A673 (cell line): ENCODE measurements at regions of chr12 and their contacts with region 1.

Region 1: DNA sequence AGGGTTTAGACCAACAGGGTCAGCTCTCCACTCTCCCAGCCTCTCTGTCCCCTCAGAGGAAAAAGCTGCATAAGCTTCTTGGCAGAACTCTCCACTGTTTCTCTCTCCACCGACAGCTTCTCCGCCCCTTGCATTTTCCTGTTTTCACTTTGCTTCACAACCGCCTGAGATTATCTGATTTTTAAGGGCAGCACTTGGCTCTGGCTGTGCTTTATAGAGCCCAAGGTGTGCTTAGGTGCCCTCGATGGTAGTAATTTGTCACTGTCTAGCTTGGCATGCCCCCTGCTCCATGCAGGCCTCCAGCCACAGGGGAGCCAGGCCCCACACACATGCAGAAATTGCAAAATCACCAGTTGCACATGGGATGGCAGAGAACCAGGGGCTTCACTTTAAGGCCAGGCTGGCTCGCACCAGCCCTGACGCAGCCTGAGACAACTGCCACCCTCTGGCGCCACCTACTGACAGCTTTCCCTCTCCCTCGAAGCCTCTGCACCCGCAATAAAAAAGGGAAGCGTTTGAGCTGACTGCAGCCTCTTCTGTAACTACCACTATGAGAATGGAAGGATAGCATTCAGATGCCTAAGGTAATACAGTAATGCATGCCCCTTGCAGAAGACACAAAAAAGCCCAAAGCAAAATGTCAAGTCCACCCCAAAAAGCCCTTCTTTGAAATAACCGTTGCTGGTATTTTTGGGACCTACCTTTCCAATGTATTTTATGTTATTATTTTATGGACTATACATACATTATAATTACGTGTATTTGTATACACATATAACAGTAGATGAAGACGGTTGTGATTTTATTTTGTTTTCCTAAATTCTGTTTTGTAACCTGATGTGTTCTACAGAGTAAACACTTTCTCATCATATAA is 32.0 kb upstream of the RIMBP2 start:
- DNase-seq: peak; percentile 86
- H3K4me3 ChIP-seq: no peak overlapping the region
- H3K27ac ChIP-seq: no peak overlapping the region
- H3K4me1 ChIP-seq: no peaks in the 10 kb centered on the region
- H3K27me3 ChIP-seq: peaks cover 15% of the 10 kb centered on the region
- CTCF ChIP-seq: peak; percentile 84

Region 2: GRCh38 chr12:130031571-130032189 is 716.4 kb before region 1 on chr12:
- CTCF ChIA-PET with region 1: no interaction called
- POLR2A ChIA-PET with region 1: no interaction called
- intact Hi-C with region 1: loop called (anchors 5 kb)
- DNase-seq: peak; percentile 56
- H3K4me3 ChIP-seq: no peak overlapping the region
- H3K27ac ChIP-seq: no peak overlapping the region
- H3K4me1 ChIP-seq: no peaks in the 10 kb centered on the region
- H3K27me3 ChIP-seq: peaks cover 41% of the 10 kb centered on the region
- CTCF ChIP-seq: peak; percentile 97

Region 3: DNA sequence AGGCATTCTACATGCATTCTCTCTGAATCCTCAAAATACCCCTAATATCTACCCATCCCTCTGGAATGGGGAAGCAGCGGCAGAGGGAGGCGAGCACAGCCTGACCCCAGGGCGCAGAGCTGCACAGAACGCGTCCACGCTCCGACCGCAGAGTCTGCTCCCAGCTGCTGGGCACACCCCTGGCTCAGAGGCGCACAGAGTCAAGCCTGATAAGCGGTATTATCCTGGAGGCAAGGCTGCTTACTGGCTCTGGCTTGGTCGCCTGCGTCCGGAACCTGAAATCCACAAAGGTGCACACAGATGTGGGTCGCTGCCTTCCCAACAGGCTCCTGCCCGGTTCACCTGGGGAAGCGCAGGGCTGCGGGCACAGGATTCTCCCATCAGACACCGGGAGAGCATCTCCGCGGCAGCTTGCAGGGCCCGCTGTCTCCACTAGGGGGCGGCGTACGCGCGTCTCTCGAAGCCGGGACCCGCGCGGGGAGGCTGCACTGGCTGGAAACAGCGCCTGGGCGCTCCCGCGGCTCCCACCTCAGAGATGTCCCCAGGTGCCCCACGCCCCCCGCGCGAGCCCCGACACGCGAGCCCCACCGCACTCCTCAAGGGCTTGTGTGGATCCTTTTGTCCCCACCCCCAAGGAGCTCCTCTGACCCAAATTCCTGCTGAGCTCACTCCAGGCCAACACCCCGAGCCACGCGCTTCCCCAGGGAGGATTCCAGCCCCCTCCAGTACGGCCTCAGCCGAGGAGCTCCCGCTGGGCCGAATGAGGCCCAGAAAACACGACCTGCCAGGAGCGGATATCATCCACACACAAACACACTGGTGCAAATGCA is 705.9 kb before region 1 on chr12:
- CTCF ChIA-PET with region 1: no interaction called
- POLR2A ChIA-PET with region 1: no interaction called
- intact Hi-C with region 1: loop called (anchors 5 kb)
- DNase-seq: no peak
- H3K4me3 ChIP-seq: no peak overlapping the region
- H3K27ac ChIP-seq: no peak overlapping the region
- H3K4me1 ChIP-seq: no peaks in the 10 kb centered on the region
- H3K27me3 ChIP-seq: peaks cover 24% of the 10 kb centered on the region
- CTCF ChIP-seq: peak; percentile 55

Region 4: GRCh38 chr12:130335517-130336392 is 412.3 kb before region 1 on chr12:
- CTCF ChIA-PET with region 1: no interaction called
- POLR2A ChIA-PET with region 1: no interaction called
- intact Hi-C with region 1: loop called (anchors 5 kb)
- DNase-seq: peak; percentile 68
- H3K4me3 ChIP-seq: no peak overlapping the region
- H3K27ac ChIP-seq: no peak overlapping the region
- H3K4me1 ChIP-seq: no peaks in the 10 kb centered on the region
- H3K27me3 ChIP-seq: peaks cover 31% of the 10 kb centered on the region
- CTCF ChIP-seq: peak; percentile 76

Region 5: DNA sequence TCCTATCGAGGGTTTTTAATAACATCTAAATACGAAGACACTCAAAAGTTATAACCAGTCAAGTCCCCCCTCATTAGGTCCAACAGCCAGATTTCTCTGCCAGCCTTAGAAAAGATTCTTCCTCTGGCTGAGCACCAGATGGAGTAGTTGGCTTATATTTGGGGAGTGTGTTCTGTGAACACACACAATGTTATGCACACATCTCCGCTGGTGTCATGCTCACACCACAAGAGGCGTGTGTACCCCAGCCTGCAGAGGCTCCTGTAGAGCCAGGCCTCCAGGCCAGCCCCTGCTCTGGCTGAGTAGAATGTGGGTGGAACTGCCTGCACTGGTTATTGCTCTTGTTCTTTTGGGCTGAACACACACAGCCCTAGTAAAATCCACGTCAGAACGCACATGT is 346.4 kb before region 1 on chr12:
- CTCF ChIA-PET with region 1: no interaction called
- POLR2A ChIA-PET with region 1: no interaction called
- intact Hi-C with region 1: loop called (anchors 5 kb)
- DNase-seq: peak; percentile 14
- H3K4me3 ChIP-seq: no peak overlapping the region
- H3K27ac ChIP-seq: no peak overlapping the region
- H3K4me1 ChIP-seq: no peaks in the 10 kb centered on the region
- H3K27me3 ChIP-seq: peaks cover 33% of the 10 kb centered on the region
- CTCF ChIP-seq: peak; percentile 26; the same call in 1 of the 2 replicates